ENCODE measurements at regions of chr16 and their contacts with region 1.

Region 1: DNA sequence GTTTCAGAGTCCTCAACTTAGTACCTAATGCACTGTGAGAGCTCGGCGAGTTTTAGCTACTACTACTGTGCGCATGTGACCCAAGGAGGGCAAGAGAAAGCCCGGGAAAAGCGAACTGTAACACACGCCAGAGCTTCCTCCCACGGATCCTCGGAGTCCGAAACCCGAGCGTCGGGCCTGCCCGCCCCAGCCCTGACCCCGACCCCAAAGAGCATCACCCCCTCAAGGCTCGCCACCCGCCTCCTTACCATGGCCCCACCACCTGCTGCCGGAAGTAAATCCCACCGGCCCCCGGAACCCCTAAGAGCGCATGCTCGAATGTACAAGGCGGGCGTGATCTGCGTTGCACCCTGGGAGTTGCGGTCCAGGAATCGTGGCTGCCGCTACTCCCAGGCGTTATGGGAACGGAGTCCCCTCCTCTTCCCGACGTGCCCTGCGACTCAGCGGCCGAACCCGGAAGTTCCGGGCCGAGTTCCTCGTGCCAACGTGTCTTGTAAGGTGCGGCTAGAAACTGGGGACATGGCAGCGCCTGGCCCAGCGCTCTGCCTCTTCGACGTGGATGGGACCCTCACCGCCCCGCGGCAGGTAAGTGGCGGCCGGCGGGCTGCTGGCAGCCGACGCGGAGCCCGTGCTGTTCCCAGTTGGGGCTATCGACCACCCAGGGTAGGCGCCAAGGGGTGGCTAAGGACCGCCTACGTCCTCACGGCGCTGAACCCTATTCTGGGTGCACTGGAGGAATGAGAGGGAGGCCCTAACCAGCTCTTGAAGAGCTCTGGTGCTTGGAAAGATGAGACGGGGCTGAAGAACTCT is at the starts of genes PMM2 and TMEM186:
- DNase-seq: peak; percentile 98
- H3K4me3 ChIP-seq: peak within 1 kb of the TSS; percentile 81 to 96 (median 88)
- H3K27ac ChIP-seq: peak within 1 kb of the TSS; percentile 80 to 86 (median 81)
- H3K4me1 ChIP-seq: peaks cover 0 to 35% (median 30%) of the 10 kb centered on the region in 4 donors
- H3K27me3 ChIP-seq: no peaks in the 10 kb centered on the region
- CTCF ChIP-seq: no peak
- EP300 ChIP-seq: peak in 1 of 4 donors; percentile 25
- POLR2A ChIP-seq: peak in 1 of 2 donors; percentile 43
- total RNA-seq, gene PMM2: 13.6 to 22.1 (median 18.4) TPM
- total RNA-seq, gene TMEM186: 1.9 to 13.3 (median 8.7) TPM

Region 2: GRCh38 chr16:8567750-8568617 is 229.6 kb before region 1 on chr16:
- intact Hi-C with region 1: loop called (anchors 5 kb)
- DNase-seq: peak; percentile 82
- H3K4me3 ChIP-seq: no peak overlapping the region
- H3K27ac ChIP-seq: no peak overlapping the region
- H3K4me1 ChIP-seq: peaks cover 0 to 13% (median 0%) of the 10 kb centered on the region in 4 donors
- H3K27me3 ChIP-seq: peaks cover 0 to 15% (median 13%) of the 10 kb centered on the region in 3 donors
- CTCF ChIP-seq: peak; percentile 89 to 96 (median 96)
- EP300 ChIP-seq: no peak
- POLR2A ChIP-seq: no peak

Region 3: GRCh38 chr16:8674413-8675022 is 123.1 kb before region 1 on chr16 and contains the start of gene ABAT:
- intact Hi-C with region 1: loop called (anchors 2 kb)
- DNase-seq: peak; percentile 94
- H3K4me3 ChIP-seq: peak within 1 kb of the TSS; percentile 27 to 64 (median 58)
- H3K27ac ChIP-seq: peak within 1 kb of the TSS in 2 of 4 donors; percentile 22 to 50
- H3K4me1 ChIP-seq: peaks cover 0 to 14% (median 11%) of the 10 kb centered on the region in 4 donors
- H3K27me3 ChIP-seq: no peaks in the 10 kb centered on the region
- CTCF ChIP-seq: no peak
- EP300 ChIP-seq: no peak
- POLR2A ChIP-seq: peak in 1 of 2 donors; percentile 20
- total RNA-seq, gene ABAT: 4.1 to 8.3 (median 6.0) TPM

Region 4: DNA sequence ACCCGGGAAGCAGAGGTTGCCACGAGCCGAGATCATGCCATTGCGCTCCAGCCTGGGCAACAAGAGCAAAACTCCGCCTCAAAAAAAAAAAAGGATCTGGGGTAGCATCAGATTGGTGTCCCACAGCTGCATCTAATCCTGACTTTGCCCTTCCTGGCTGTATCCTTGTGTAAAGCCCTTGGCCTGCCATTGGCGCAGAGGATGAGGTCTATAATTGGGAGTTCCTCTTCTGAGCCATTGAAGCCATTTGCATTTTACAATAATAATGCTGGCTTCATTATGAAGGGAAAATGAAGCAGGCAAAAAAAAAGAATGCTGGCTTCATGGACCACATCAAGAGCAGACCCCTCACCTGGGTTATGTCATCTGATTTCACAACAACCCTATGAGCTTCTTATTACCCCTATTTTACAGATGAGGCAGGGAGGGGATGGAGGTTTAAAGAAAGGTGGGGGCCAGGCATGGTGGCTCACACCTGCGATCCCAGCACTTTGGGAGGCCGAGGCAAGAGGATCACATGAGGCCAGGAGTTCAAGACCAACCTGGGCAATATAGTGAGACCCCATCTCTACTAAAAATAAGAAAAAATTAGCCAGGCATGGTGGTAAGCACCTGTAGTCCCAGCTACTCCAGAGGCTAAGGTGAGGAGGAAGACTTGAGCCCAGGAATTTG is 83.4 kb after region 1 on chr16:
- intact Hi-C with region 1: loop called (anchors 5 kb)
- DNase-seq: no peak
- H3K4me3 ChIP-seq: no peak overlapping the region
- H3K27ac ChIP-seq: no peak overlapping the region
- H3K4me1 ChIP-seq: peaks cover 0 to 12% (median 9%) of the 10 kb centered on the region in 4 donors
- H3K27me3 ChIP-seq: peaks cover 0 to 43% (median 8%) of the 10 kb centered on the region in 3 donors
- CTCF ChIP-seq: no peak
- EP300 ChIP-seq: no peak
- POLR2A ChIP-seq: no peak

Region 5: GRCh38 chr16:9090960-9091866 is 293.6 kb after region 1 on chr16 and contains the start of gene HAPSTR1:
- intact Hi-C with region 1: loop called (anchors 10 kb)
- DNase-seq: peak; percentile 100
- H3K4me3 ChIP-seq: peak within 1 kb of the TSS; percentile 70 to 90 (median 85)
- H3K27ac ChIP-seq: peak within 1 kb of the TSS; percentile 97 to 99 (median 99)
- H3K4me1 ChIP-seq: peaks cover 0 to 47% (median 42%) of the 10 kb centered on the region in 4 donors
- H3K27me3 ChIP-seq: no peaks in the 10 kb centered on the region
- CTCF ChIP-seq: no peak
- EP300 ChIP-seq: no peak
- POLR2A ChIP-seq: peak; percentile 81 to 89
- total RNA-seq, gene HAPSTR1: 43.8 to 47.6 (median 46.2) TPM

Measured in sigmoid colon (tissue), 7 donors.